ENCODE measurements at regions of chr17 and their contacts with region 1.

Region 1: GRCh38 chr17:44919885-44920564 is 4.7 kb upstream of the GFAP start:
- DNase-seq: peak; percentile 71 to 98 (median 86)

Region 2: DNA sequence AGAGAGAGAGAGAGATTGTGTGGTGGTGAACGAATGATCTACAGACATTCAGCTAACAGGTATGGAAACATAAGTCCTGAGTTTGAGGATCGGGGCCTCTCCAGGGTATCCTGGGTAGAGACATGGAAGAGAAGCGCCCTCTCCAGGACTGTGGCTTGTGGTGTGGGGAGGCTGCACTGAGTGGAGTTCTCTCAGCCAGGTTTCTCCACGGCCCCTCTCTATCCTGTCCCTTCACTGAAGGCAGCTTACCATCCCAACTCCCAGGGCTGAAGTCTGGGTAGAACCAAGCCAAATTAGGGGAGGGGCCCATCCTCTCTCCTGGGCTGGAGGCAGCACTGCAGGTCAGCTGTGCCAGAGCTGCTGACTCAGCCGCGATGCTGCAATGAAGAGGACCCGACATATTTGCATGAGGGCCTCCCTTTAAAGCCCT is 41.9 kb after region 1 on chr17:
- intact Hi-C with region 1: no loop called
- DNase-seq: peak in 3 of 10 donors; percentile 9 to 58 (median 20)

Region 3: GRCh38 chr17:45098869-45099616 is 179.0 kb after region 1 on chr17:
- intact Hi-C with region 1: loop called (anchors 5 kb)
- DNase-seq: peak; percentile 67 to 97 (median 84)

Measured in posterior cingulate gyrus (tissue), 11 donors.